ENCODE measurements at regions of chr15 and their contacts with region 1.

Region 1: GRCh38 chr15:64422697-64423096 is 35.1 kb downstream of the TRIP4 start:
- DNase-seq: no peak
- ATAC-seq: no peak
- H3K4me3 ChIP-seq: no peak overlapping the region
- H3K4me3 Mint-ChIP-seq: no peak overlapping the region
- H3K27ac ChIP-seq: no peak overlapping the region
- H3K27ac Mint-ChIP-seq: peak overlapping the region in 1 of 2 donors; percentile 3
- H3K4me1 ChIP-seq: peaks cover 8 to 15% of the 10 kb centered on the region in 2 experiments
- H3K4me1 Mint-ChIP-seq: peaks cover 13 to 17% (median 14%) of the 10 kb centered on the region in 3 donors
- H3K27me3 ChIP-seq: no peaks in the 10 kb centered on the region
- H3K27me3 Mint-ChIP-seq: no peaks in the 10 kb centered on the region

Region 2: GRCh38 chr15:64344651-64345294 is 77.9 kb before region 1 on chr15:
- CTCF ChIA-PET with region 1: no interaction called
- POLR2A ChIA-PET with region 1: interaction called, 6 to 17 read pairs
- DNase-seq: no peak
- ATAC-seq: no peak
- H3K4me3 ChIP-seq: no peak overlapping the region
- H3K4me3 Mint-ChIP-seq: no peak overlapping the region
- H3K27ac ChIP-seq: no peak overlapping the region
- H3K27ac Mint-ChIP-seq: no peak overlapping the region
- H3K4me1 ChIP-seq: no peaks in the 10 kb centered on the region
- H3K4me1 Mint-ChIP-seq: peaks cover 29 to 39% (median 30%) of the 10 kb centered on the region in 3 donors
- H3K27me3 ChIP-seq: no peaks in the 10 kb centered on the region
- H3K27me3 Mint-ChIP-seq: no peaks in the 10 kb centered on the region

Region 3: GRCh38 chr15:64464276-64464998 is 41.7 kb after region 1 on chr15:
- CTCF ChIA-PET with region 1: interaction called in 1 of 2 experiments, 8 read pairs
- POLR2A ChIA-PET with region 1: interaction called in 1 of 2 experiments, 12 read pairs
- DNase-seq: no peak
- ATAC-seq: no peak
- H3K4me3 ChIP-seq: no peak overlapping the region
- H3K4me3 Mint-ChIP-seq: peak overlapping the region; percentile 25 to 81 (median 54)
- H3K27ac ChIP-seq: no peak overlapping the region
- H3K27ac Mint-ChIP-seq: peak overlapping the region; percentile 65 to 87
- H3K4me1 ChIP-seq: peaks cover 39 to 46% of the 10 kb centered on the region in 2 experiments
- H3K4me1 Mint-ChIP-seq: peaks cover 81 to 89% (median 82%) of the 10 kb centered on the region in 3 donors
- H3K27me3 ChIP-seq: no peaks in the 10 kb centered on the region
- H3K27me3 Mint-ChIP-seq: no peaks in the 10 kb centered on the region

Measured in T-cell (primary cell).